Mammary epithelial cell (primary cell): ENCODE measurements at regions of chr18 and their contacts with region 1.

Region 1: GRCh38 chr18:4093676-4094075 is 361.4 kb downstream of the DLGAP1 start:
- DNase-seq: no peak
- H3K4me3 ChIP-seq: no peak overlapping the region
- H3K27ac ChIP-seq: no peak overlapping the region
- H3K4me1 ChIP-seq: no peaks in the 10 kb centered on the region
- H3K27me3 ChIP-seq: no peaks in the 10 kb centered on the region
- CTCF ChIP-seq: no peak

Region 2: GRCh38 chr18:4077721-4078120 is 16.0 kb before region 1 on chr18:
- CTCF ChIA-PET with region 1: no interaction called
- dilution Hi-C with region 1: no loop called
- in situ Hi-C with region 1: no loop called
- intact Hi-C with region 1: loop called (anchors 1 kb)
- DNase-seq: no peak
- H3K4me3 ChIP-seq: no peak overlapping the region
- H3K27ac ChIP-seq: no peak overlapping the region
- H3K4me1 ChIP-seq: no peaks in the 10 kb centered on the region
- H3K27me3 ChIP-seq: no peaks in the 10 kb centered on the region
- CTCF ChIP-seq: no peak

Region 3: DNA sequence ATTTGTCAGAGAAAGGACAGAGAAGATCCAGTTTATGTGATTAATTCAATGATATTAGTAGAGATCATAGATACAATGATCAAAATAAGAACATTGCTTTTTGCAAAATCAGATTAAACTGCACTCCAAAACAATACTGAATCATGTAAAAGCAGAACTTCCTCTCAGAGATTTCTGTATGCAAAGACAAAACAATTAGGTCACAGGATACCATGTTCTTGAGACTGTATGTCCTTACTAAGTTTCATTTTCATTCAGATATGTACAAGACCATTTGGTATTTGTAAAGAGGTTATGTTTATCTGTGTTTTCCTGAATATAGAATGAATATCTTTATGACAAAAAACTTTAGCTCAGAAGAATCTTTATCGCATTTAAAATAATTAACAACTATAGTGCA is 199.7 kb after region 1 on chr18:
- CTCF ChIA-PET with region 1: no interaction called
- dilution Hi-C with region 1: no loop called
- in situ Hi-C with region 1: no loop called
- intact Hi-C with region 1: no loop called
- DNase-seq: no peak
- H3K4me3 ChIP-seq: no peak overlapping the region
- H3K27ac ChIP-seq: no peak overlapping the region
- H3K4me1 ChIP-seq: no peaks in the 10 kb centered on the region
- H3K27me3 ChIP-seq: no peaks in the 10 kb centered on the region
- CTCF ChIP-seq: no peak